Mammary epithelial cell (primary cell): ENCODE measurements at regions of chr12 and their contacts with region 1.

Region 1: DNA sequence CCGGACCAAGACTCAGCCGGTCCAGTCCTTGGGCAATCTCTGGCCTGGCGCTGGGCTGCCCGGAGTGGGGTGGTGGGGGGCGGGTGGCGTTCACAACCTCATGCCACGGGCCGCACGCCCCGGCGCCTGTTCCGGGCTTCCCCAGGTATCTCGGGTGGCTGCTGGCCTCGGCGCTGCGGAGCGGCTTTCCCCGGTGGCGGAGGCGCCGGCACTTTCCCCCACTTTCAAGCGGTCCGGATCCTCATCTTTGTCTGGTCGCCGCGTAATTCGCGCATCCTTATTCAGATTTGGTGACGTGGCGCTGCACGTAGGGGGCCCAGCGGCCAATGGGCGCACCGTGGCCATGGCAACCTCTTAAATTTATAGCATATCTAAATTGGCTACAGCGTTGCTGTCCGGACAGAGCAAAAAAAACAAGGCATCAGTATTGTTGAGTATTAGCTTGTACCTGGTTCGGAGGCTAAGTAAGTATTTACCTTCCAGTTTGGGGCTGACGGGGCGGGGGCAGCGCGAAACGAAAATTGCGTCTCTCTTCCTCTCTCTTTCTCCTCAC is at the start of gene LHX5:
- DNase-seq: no peak
- H3K4me3 ChIP-seq: no peak within 1 kb of the TSS
- H3K27ac ChIP-seq: no peak within 1 kb of the TSS
- H3K4me1 ChIP-seq: peaks cover 17% of the 10 kb centered on the region
- H3K27me3 ChIP-seq: peaks cover 91% of the 10 kb centered on the region
- CTCF ChIP-seq: no peak
- total RNA-seq, gene LHX5: 0.49 to 0.67 TPM

Region 2: DNA sequence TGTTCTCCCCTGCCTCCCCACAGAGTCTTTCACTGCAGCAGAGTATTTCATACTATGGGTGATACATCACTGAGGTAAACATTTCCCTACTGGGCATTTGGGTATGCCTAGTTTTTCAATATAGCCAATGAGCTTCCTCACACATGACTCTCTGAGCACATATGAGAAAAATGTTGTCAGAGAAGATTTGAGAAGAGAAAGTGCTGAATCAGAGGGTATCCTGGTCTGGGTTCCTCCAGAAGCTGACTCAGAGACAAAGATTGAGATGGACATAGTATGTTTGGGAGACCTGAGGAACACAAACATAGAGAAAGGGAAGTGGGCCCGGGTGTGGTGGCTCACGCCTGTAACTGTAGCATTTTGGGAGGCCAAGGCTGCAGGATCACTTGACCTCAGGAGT is 149.4 kb before region 1 on chr12:
- CTCF ChIA-PET with region 1: no interaction called
- dilution Hi-C with region 1: no loop called
- in situ Hi-C with region 1: no loop called
- intact Hi-C with region 1: no loop called
- DNase-seq: peak; percentile 82
- H3K4me3 ChIP-seq: no peak overlapping the region
- H3K27ac ChIP-seq: no peak overlapping the region
- H3K4me1 ChIP-seq: no peaks in the 10 kb centered on the region
- H3K27me3 ChIP-seq: no peaks in the 10 kb centered on the region
- CTCF ChIP-seq: no peak

Region 3: DNA sequence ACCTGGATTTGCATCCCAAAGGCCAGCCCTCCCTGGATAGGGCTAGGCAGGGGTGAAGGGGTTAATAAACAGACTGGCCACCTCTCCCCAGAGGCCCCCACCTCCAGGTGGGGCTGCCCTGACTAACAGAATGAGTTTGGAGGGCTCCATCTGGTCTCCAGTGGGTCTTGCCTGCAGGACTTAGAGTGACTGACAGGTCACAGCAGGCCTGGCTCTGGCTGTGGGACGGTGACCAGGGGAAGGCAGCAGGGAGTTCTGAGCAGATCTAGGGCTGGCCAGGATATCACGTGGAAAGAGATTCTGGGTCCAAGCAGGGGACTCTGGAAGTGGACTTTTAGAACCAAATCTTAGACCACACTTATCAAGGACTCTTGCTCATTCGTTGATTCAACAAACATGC is 40.9 kb after region 1 on chr12:
- CTCF ChIA-PET with region 1: no interaction called
- dilution Hi-C with region 1: loop called (anchors 5 kb)
- in situ Hi-C with region 1: no loop called
- intact Hi-C with region 1: no loop called
- DNase-seq: no peak
- H3K4me3 ChIP-seq: no peak overlapping the region
- H3K27ac ChIP-seq: no peak overlapping the region
- H3K4me1 ChIP-seq: no peaks in the 10 kb centered on the region
- H3K27me3 ChIP-seq: peaks cover 7% of the 10 kb centered on the region
- CTCF ChIP-seq: no peak

Region 4: GRCh38 chr12:113555236-113555635 is 83.5 kb after region 1 on chr12:
- CTCF ChIA-PET with region 1: no interaction called
- dilution Hi-C with region 1: no loop called
- in situ Hi-C with region 1: no loop called
- intact Hi-C with region 1: no loop called
- DNase-seq: no peak
- H3K4me3 ChIP-seq: no peak overlapping the region
- H3K27ac ChIP-seq: no peak overlapping the region
- H3K4me1 ChIP-seq: no peaks in the 10 kb centered on the region
- H3K27me3 ChIP-seq: no peaks in the 10 kb centered on the region
- CTCF ChIP-seq: no peak

Region 5: DNA sequence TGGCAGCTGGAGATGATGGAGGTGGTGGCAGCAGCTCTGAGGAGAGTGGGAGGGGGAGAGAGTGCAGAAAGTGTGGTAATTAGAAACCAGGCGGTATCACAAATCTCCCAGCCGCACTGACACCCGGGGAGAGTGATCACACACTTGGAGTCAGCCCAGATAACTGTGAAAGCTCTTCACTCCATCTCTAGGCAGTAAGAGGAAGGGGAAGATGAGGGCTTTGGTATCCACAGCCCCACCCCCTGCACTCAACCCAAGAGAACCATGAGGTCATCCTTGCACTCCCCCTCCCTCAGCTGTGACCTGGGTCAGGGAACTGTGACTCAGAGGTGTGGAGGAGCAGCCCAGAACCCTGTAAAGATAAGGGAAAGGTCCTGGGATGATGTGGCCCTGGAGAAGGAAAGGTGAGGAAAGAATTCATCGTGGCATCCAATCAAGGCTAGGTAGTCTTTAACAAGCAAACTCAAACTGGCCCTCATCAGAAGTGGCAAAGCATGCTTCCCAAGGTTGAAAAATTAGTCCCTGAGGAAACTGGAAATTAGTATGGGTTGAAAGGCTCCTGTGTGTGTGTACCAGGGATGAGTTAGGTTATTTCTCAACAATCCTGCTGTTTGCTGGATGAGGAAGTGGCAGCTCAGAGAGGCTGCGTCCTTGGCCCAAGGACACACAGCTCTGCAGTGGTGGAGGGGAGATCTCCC is 111.0 kb after region 1 on chr12:
- CTCF ChIA-PET with region 1: no interaction called
- dilution Hi-C with region 1: no loop called
- in situ Hi-C with region 1: no loop called
- intact Hi-C with region 1: no loop called
- DNase-seq: no peak
- H3K4me3 ChIP-seq: no peak overlapping the region
- H3K27ac ChIP-seq: no peak overlapping the region
- H3K4me1 ChIP-seq: no peaks in the 10 kb centered on the region
- H3K27me3 ChIP-seq: peaks cover 2% of the 10 kb centered on the region
- CTCF ChIP-seq: no peak